Mammary epithelial cell (primary cell): ENCODE measurements at regions of chr1 and their contacts with region 1.

Region 1: DNA sequence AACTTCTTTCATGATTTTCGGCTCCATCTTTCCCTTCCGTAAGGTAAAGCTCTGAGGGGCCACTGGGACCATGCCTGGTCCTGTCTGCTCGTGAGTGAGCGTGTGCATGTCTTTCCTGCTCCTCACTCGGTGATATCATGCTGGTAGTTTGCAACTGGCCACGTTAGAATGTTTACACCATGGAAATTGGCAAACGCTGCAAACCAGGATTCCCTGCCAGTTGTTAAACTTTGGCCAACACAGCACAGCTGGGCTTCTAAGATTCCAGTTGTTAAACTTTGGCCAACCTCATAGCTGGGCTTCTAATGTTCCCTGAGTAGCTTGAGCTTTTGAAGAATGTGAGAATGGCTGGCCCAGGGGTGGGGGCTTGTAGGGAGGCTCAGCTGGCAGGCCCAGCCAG is 68.0 kb upstream of the ACTL8 start:
- DNase-seq: no peak
- H3K4me3 ChIP-seq: no peak overlapping the region
- H3K27ac ChIP-seq: no peak overlapping the region
- H3K4me1 ChIP-seq: no peaks in the 10 kb centered on the region
- H3K27me3 ChIP-seq: no peaks in the 10 kb centered on the region
- CTCF ChIP-seq: no peak

Region 2: GRCh38 chr1:17653728-17654351 is 33.3 kb before region 1 on chr1:
- CTCF ChIA-PET with region 1: no interaction called
- dilution Hi-C with region 1: no loop called
- in situ Hi-C with region 1: no loop called
- intact Hi-C with region 1: no loop called
- DNase-seq: no peak
- H3K4me3 ChIP-seq: no peak overlapping the region
- H3K27ac ChIP-seq: no peak overlapping the region
- H3K4me1 ChIP-seq: no peaks in the 10 kb centered on the region
- H3K27me3 ChIP-seq: no peaks in the 10 kb centered on the region
- CTCF ChIP-seq: peak; percentile 70 to 80

Region 3: DNA sequence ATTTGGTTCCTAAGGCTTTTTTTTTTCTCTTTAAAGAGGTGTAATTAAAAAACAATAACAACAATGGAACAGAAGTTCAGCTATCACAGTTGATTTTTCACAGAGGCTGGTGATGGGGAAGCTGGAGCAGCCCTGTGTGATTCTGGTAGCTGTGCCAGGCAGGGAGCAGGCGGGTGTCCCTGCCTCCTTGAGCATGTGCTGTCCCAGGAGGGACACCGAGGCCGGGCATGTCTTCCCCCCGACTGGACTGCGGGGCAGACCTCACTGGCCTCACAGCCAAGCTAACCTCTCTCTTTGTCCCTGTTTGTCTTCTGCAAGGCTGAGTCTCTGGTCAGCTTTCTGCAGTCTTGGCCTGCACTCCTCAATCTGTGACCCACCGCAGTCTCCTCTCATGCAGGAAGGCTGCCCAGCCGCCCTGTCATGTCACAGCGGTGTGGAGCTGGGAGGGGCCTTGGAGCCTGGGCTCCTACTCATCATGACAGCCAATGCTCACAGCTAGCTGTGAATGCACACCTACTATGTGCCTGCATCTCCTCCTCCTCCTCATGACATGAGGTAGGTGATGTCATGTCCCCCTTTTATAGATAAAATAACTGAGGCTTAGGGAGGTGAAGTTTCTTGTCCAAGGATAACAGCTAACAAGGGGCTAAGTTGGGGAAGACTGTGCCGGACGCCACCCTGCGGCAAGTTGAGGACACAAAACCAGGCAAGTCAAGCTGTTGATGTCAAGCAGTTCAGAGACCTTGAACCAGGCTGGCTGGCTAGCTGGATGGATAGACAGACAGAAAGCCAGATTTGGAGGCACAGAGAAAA is 57.7 kb after region 1 on chr1:
- CTCF ChIA-PET with region 1: no interaction called
- dilution Hi-C with region 1: loop called (anchors 5 kb)
- in situ Hi-C with region 1: no loop called
- intact Hi-C with region 1: no loop called
- DNase-seq: no peak
- H3K4me3 ChIP-seq: no peak overlapping the region
- H3K27ac ChIP-seq: no peak overlapping the region
- H3K4me1 ChIP-seq: no peaks in the 10 kb centered on the region
- H3K27me3 ChIP-seq: no peaks in the 10 kb centered on the region
- CTCF ChIP-seq: no peak

Region 4: GRCh38 chr1:17795836-17796645 is 108.9 kb after region 1 on chr1:
- CTCF ChIA-PET with region 1: no interaction called
- dilution Hi-C with region 1: loop called (anchors 5 kb)
- in situ Hi-C with region 1: no loop called
- intact Hi-C with region 1: no loop called
- DNase-seq: no peak
- H3K4me3 ChIP-seq: no peak overlapping the region
- H3K27ac ChIP-seq: no peak overlapping the region
- H3K4me1 ChIP-seq: no peaks in the 10 kb centered on the region
- H3K27me3 ChIP-seq: no peaks in the 10 kb centered on the region
- CTCF ChIP-seq: no peak